Activated naive CD4-positive, alpha-beta T cell treated with anti-CD3 and anti-CD28 coated beads, Interleukin-2, amount 10 ng/mL, durations not matched to agents 7 days and 5 days (primary cell): ENCODE measurements at regions of chr6 and their contacts with region 1.

Region 1: GRCh38 chr6:25278914-25279747 is at the start of gene CARMIL1:
- DNase-seq: peak; percentile 84
- H3K4me3 Mint-ChIP-seq: peak within 1 kb of the TSS; percentile 84
- H3K27ac Mint-ChIP-seq: peak within 1 kb of the TSS; percentile 68
- H3K4me1 Mint-ChIP-seq: peaks cover 24% of the 10 kb centered on the region
- H3K27me3 Mint-ChIP-seq: peaks cover 27% of the 10 kb centered on the region

Region 2: GRCh38 chr6:25056130-25056529 is 223.0 kb before region 1 on chr6:
- CTCF ChIA-PET with region 1: no interaction called
- DNase-seq: peak; percentile 84
- H3K4me3 Mint-ChIP-seq: peak overlapping the region; percentile 43
- H3K27ac Mint-ChIP-seq: peak overlapping the region; percentile 85
- H3K4me1 Mint-ChIP-seq: peaks cover 77% of the 10 kb centered on the region
- H3K27me3 Mint-ChIP-seq: no peaks in the 10 kb centered on the region

Region 3: GRCh38 chr6:25369433-25370181 is 90.5 kb after region 1 on chr6:
- CTCF ChIA-PET with region 1: interaction called, 11 read pairs
- DNase-seq: peak; percentile 27
- H3K4me3 Mint-ChIP-seq: peak overlapping the region; percentile 39
- H3K27ac Mint-ChIP-seq: peak overlapping the region; percentile 80
- H3K4me1 Mint-ChIP-seq: peaks cover 67% of the 10 kb centered on the region
- H3K27me3 Mint-ChIP-seq: no peaks in the 10 kb centered on the region

Region 4: DNA sequence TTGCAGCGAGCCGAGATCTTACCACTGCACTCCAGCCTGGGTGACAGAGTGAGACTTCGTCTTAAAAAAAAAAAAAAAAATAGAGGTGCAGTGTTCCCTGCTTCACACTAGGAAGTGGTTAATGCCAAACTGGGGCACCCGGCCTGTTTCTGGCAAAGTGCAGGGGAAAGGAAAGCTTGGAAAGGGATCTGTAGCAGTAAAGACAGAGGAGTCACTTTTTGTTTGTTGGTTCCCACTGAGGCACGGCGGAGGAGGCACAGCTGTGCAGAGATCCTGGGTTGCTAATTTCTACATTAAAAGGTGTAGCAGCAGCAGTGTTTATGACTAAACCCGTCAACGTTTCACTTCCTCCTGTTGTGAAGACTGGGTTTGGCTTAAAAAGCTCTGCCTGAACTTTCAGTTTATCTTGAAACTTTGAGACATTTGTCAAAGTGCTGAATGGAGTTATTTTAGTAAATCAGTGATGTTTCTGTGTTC is 125.6 kb after region 1 on chr6:
- CTCF ChIA-PET with region 1: interaction called, 10 read pairs
- DNase-seq: peak; percentile 56
- H3K4me3 Mint-ChIP-seq: no peak overlapping the region
- H3K27ac Mint-ChIP-seq: no peak overlapping the region
- H3K4me1 Mint-ChIP-seq: peaks cover 3% of the 10 kb centered on the region
- H3K27me3 Mint-ChIP-seq: no peaks in the 10 kb centered on the region

Region 5: GRCh38 chr6:25490018-25490801 is 211.1 kb after region 1 on chr6:
- CTCF ChIA-PET with region 1: interaction called, 87 read pairs
- DNase-seq: peak; percentile 81
- H3K4me3 Mint-ChIP-seq: no peak overlapping the region
- H3K27ac Mint-ChIP-seq: no peak overlapping the region
- H3K4me1 Mint-ChIP-seq: peaks cover 7% of the 10 kb centered on the region
- H3K27me3 Mint-ChIP-seq: no peaks in the 10 kb centered on the region

Region 6: DNA sequence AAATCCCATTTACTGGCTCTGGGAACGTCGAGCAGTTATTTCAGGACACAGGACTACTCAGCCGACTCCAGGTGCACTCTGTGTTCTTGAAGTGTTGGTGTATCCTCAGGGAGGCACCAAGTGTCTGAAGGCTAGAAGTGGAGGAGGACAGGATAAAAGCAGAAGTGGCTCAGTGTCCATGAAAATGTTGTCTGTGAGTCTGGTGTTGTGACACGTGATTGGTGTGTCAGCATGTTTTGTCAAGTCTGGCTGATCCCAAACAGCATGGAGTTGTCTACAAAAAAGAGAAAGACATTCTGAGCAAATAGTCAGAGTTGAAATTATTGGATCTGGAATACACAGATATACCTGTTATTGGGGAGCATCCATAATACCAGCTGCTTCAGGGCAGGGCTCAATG is 403.2 kb after region 1 on chr6:
- CTCF ChIA-PET with region 1: no interaction called
- DNase-seq: no peak
- H3K4me3 Mint-ChIP-seq: no peak overlapping the region
- H3K27ac Mint-ChIP-seq: no peak overlapping the region
- H3K4me1 Mint-ChIP-seq: no peaks in the 10 kb centered on the region
- H3K27me3 Mint-ChIP-seq: peaks cover 17% of the 10 kb centered on the region